Activated T-helper 2 cell treated with anti-CD3 and anti-CD28 coated beads, Interferon-gamma antibody, Interleukin-2, Interleukin-4, amounts not matched to agents 10 μg/mL and 5 μg/mL and 100 μg/mL, durations not matched to agents 14 hours and 24 hours and 36 hours (primary cell): ENCODE measurements at regions of chr2 and their contacts with region 1.

Region 1: GRCh38 chr2:209208211-209208610 is 215.6 kb upstream of the MAP2 start:
- DNase-seq: no peak
- H3K4me3 Mint-ChIP-seq: peak overlapping the region; percentile 68
- H3K27ac Mint-ChIP-seq: no peak overlapping the region
- H3K4me1 Mint-ChIP-seq: peaks cover 3% of the 10 kb centered on the region
- H3K27me3 Mint-ChIP-seq: no peaks in the 10 kb centered on the region

Region 2: GRCh38 chr2:208175069-208175839 is 1033.0 kb before region 1 on chr2:
- intact Hi-C with region 1: loop called (anchors 10 kb)
- DNase-seq: peak; percentile 32
- H3K4me3 Mint-ChIP-seq: no peak overlapping the region
- H3K27ac Mint-ChIP-seq: no peak overlapping the region
- H3K4me1 Mint-ChIP-seq: peaks cover 3% of the 10 kb centered on the region
- H3K27me3 Mint-ChIP-seq: peaks cover 8% of the 10 kb centered on the region

Region 3: DNA sequence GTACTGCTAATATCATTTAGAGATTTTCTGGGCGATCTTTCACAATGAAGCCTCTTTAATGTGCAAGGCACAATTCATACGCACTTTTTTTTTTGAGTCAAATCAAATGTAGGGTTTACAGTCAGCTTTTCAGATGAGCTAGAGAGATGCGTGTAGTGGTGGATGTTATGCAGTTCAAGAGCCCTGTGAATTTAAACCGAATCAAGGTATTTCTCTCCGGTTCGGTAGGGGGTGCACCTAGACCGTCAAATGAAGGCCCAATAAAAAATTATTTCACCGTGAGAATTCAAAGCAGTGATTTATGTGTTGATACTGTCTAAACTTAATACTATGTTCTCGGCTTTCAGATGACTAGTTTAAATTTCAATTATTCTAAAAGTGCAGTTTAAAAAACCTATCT is 800.5 kb before region 1 on chr2:
- intact Hi-C with region 1: loop called (anchors 10 kb)
- DNase-seq: no peak
- H3K4me3 Mint-ChIP-seq: no peak overlapping the region
- H3K27ac Mint-ChIP-seq: no peak overlapping the region
- H3K4me1 Mint-ChIP-seq: peaks cover 2% of the 10 kb centered on the region
- H3K27me3 Mint-ChIP-seq: peaks cover 50% of the 10 kb centered on the region

Region 4: GRCh38 chr2:208466151-208466919 is 741.9 kb before region 1 on chr2:
- intact Hi-C with region 1: loop called (anchors 2 kb)
- DNase-seq: no peak
- H3K4me3 Mint-ChIP-seq: no peak overlapping the region
- H3K27ac Mint-ChIP-seq: no peak overlapping the region
- H3K4me1 Mint-ChIP-seq: no peaks in the 10 kb centered on the region
- H3K27me3 Mint-ChIP-seq: peaks cover 3% of the 10 kb centered on the region

Region 5: DNA sequence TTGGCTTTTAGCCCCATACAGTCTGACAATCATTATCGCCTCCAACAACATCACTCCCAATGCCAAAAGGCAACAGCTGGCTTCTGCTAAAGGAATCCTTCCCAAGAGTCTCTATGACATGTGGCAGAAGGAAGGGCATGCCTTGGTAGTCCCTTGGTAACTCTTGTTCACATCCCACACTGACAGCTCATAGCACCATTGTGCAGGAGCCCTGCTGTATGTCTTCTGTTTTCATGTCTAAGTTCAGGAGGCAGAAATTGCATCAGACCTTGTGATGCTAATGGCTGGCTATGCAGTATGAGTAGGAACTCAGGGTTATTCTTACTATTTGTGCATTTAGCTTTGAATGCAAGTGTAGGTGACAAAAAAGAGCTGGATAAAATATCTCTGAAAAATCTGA is 409.5 kb before region 1 on chr2:
- intact Hi-C with region 1: no loop called
- DNase-seq: no peak
- H3K4me3 Mint-ChIP-seq: no peak overlapping the region
- H3K27ac Mint-ChIP-seq: no peak overlapping the region
- H3K4me1 Mint-ChIP-seq: no peaks in the 10 kb centered on the region
- H3K27me3 Mint-ChIP-seq: no peaks in the 10 kb centered on the region

Region 6: DNA sequence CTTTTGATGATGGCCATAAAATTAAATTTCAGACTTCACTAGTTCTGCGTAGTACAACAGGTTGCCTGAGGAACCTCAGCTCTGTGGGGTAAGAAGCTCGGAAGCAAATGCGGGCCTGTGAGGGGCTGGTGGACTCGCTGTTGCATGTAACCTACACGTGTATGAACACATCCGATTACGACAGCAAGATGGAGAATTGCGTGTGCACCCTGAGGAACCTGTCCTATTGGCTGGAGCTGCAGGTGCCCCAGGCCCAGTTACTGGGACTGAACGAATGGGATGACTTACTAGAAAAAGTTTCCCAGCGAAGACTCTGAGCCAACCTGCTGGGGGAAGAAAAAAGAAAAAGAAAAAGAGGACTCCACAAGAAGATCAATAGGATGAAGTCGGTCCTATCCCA is 28.6 kb before region 1 on chr2:
- intact Hi-C with region 1: no loop called
- DNase-seq: no peak
- H3K4me3 Mint-ChIP-seq: no peak overlapping the region
- H3K27ac Mint-ChIP-seq: no peak overlapping the region
- H3K4me1 Mint-ChIP-seq: no peaks in the 10 kb centered on the region
- H3K27me3 Mint-ChIP-seq: no peaks in the 10 kb centered on the region